ENCODE measurements at regions of chr7 and their contacts with region 1.

Region 1: GRCh38 chr7:148698397-148699023 is at the start of gene CUL1:
- DNase-seq: peak; percentile 83
- H3K4me3 Mint-ChIP-seq: peak within 1 kb of the TSS; percentile 91
- H3K27ac Mint-ChIP-seq: peak within 1 kb of the TSS; percentile 95
- H3K4me1 Mint-ChIP-seq: peaks cover 57% of the 10 kb centered on the region
- H3K27me3 Mint-ChIP-seq: no peaks in the 10 kb centered on the region
- total RNA-seq, gene CUL1: 69.4 and 74.5 TPM in 2 replicates

Region 2: GRCh38 chr7:148547951-148548350 is 150.6 kb before region 1 on chr7:
- intact Hi-C with region 1: no loop called
- DNase-seq: no peak
- H3K4me3 Mint-ChIP-seq: no peak overlapping the region
- H3K27ac Mint-ChIP-seq: no peak overlapping the region
- H3K4me1 Mint-ChIP-seq: peaks cover 10% of the 10 kb centered on the region
- H3K27me3 Mint-ChIP-seq: peaks cover 23% of the 10 kb centered on the region

Region 3: GRCh38 chr7:148563583-148564274 is 134.8 kb before region 1 on chr7:
- intact Hi-C with region 1: loop called (anchors 1 kb)
- DNase-seq: no peak
- H3K4me3 Mint-ChIP-seq: peak overlapping the region; percentile 44
- H3K27ac Mint-ChIP-seq: peak overlapping the region; percentile 75
- H3K4me1 Mint-ChIP-seq: peaks cover 16% of the 10 kb centered on the region
- H3K27me3 Mint-ChIP-seq: peaks cover 21% of the 10 kb centered on the region

Region 4: DNA sequence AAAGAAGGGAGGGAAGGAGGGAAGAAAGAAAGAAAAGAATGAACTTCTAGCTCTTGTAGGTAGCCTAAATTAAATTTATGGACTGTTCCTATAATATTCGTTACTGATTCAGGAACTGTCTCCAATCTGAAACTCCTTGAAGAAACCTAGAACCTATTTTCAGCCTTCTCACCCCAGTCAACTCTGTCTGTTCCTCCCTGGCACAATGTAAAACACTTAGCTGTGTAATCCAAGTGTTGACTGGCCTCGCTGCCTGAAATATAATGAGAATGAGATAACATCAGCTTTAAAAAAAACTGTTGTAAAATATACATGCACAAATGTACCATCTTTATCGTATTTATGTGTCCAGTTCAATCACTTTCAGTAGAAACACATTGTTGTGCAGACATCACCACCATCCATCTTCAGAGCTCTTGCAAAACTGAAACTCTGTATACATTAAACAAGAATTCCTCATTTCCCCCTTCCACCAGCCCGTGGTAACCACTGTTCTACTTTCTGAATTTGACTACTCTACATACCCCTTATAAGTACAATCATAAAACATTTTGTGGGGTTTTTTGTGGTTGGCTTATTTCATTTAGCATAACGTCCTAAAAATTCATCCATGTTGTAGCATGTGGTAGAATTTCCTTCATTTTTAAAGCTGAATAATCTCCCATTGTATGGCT is 114.2 kb before region 1 on chr7:
- intact Hi-C with region 1: loop called (anchors 1 kb)
- DNase-seq: no peak
- H3K4me3 Mint-ChIP-seq: peak overlapping the region; percentile 38
- H3K27ac Mint-ChIP-seq: no peak overlapping the region
- H3K4me1 Mint-ChIP-seq: peaks cover 33% of the 10 kb centered on the region
- H3K27me3 Mint-ChIP-seq: peaks cover 16% of the 10 kb centered on the region

Region 5: DNA sequence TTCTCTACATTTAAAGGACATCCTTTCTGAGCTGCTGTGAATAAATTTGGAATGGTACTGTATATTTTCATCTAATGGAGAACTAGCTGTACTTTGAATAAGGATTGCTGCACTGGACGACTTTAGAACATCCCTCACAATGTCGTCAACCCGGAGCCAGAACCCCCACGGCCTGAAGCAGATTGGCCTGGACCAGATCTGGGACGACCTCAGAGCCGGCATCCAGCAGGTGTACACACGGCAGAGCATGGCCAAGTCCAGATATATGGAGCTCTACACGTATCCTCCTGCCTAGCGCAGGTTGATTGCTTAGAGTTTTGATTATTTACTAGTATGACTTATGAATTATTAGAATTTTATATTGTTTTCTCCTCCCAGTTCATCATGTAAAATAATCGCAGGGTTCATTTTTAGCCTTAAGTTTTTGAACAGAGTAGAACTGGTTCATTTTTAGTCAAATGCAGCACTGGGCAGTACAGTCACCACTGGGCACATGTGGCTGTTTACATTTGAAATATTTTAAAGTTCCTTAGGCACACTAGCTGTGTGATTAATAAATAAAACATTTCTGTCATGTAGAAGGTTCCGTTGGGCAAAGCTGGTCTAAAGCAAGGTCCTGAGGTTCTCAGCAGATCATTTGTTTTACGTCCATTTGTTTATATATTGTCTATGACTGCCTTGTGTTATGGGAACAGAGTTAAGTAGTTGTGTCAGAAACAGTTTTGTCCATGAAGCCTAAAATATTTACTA is 31.6 kb after region 1 on chr7:
- intact Hi-C with region 1: loop called (anchors 2 kb)
- DNase-seq: no peak
- H3K4me3 Mint-ChIP-seq: no peak overlapping the region
- H3K27ac Mint-ChIP-seq: no peak overlapping the region
- H3K4me1 Mint-ChIP-seq: peaks cover 43% of the 10 kb centered on the region
- H3K27me3 Mint-ChIP-seq: no peaks in the 10 kb centered on the region

Region 6: DNA sequence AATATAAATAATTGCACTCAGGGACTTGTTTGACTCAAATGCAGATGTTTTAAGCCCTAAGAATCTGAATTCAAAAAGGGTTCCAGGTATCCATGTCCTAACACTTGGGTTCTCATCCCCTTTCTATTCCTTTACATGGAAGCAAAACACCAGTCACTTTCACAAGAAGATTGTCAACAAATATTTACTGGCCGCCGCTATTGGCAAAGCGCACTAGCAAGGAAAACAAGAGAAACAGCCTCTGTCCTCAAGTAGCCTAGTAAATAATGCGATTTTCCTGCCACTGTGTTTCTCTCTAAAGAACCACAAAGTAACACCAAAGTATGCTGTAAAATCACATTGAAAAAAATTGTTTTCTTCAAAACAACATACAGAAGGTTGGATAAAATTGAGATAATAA is 252.3 kb after region 1 on chr7:
- intact Hi-C with region 1: no loop called
- DNase-seq: no peak
- H3K4me3 Mint-ChIP-seq: no peak overlapping the region
- H3K27ac Mint-ChIP-seq: no peak overlapping the region
- H3K4me1 Mint-ChIP-seq: peaks cover 2% of the 10 kb centered on the region
- H3K27me3 Mint-ChIP-seq: no peaks in the 10 kb centered on the region

Region 7: DNA sequence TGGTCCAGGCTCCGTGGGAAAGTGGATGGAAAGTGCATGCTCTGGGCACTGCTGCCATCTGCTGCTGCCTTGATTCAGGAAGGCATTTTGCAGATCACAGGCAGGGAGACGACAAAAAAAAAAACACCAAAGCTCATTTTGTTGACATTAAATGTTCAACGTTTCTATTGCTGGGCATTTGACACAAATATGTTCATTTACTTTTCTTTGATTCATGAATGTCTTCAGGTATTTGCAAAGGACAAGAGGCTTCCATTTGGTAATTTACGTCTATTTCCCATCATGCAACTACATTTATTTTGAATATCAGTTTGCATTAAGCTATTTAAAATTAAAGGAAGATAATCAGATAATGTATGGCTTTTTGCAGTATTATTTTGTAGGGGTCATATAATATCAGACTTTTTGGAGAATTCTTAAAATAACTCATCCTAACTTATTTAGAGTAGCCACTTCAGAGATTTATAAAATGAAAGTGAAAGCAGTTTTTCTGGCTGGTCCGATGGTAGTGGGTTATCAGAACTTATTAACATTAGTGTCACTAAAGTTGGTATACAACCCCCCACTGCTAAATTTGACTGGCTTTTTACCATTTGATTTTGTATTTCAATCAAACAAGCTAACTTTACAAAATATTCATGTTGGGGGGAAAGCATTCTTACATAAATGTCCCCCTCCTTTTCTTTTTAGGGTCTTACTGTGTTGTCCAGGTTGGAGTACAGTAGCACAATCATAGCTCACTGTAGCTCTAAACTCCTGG is 264.5 kb after region 1 on chr7:
- intact Hi-C with region 1: loop called (anchors 2 kb)
- DNase-seq: peak; percentile 51
- H3K4me3 Mint-ChIP-seq: peak overlapping the region; percentile 86
- H3K27ac Mint-ChIP-seq: peak overlapping the region; percentile 77
- H3K4me1 Mint-ChIP-seq: peaks cover 25% of the 10 kb centered on the region
- H3K27me3 Mint-ChIP-seq: no peaks in the 10 kb centered on the region

Region 8: DNA sequence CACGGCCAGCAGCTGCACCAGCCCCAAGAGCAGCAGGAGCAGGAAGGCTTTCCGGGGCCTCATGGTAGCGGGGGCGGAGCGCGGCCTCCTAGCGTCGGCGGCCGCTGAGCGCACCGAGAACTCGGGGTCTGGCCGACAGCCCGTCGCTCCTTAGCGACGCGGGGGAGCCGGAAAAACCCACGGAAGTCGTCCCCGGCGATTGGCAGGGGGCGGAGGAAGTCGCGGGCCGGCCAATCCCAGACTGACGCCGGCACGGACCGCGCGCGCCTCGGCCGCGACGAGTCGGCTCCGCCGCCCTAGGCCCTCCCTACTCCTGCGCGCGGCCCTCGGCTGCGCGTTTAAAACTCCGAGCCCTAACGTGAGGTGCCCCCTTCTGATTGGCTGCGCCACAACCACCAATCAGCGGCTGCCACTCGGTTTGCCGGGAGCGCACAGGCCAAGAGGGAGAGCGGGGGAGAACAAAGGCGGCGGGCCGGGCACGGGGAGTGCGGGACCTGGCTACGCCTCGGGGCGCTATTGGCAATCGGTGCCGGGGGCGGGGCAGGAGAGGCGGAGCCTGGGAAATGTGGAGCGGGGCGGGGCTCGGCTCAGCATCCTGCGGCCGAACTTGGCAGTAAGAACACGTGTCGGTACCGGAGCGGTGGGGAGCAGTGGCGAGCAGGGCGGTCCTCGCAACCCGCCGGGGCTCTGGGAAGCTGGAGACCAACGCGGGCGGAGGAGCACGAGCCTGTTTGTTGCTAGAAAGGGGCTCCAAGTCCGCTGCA is 330.0 kb after region 1 on chr7 and contains the start of gene PDIA4:
- intact Hi-C with region 1: loop called (anchors 1 kb)
- DNase-seq: peak; percentile 100
- H3K4me3 Mint-ChIP-seq: peak within 1 kb of the TSS; percentile 98
- H3K27ac Mint-ChIP-seq: peak within 1 kb of the TSS; percentile 93
- H3K4me1 Mint-ChIP-seq: peaks cover 32% of the 10 kb centered on the region
- H3K27me3 Mint-ChIP-seq: peaks cover 2% of the 10 kb centered on the region
- total RNA-seq, gene PDIA4: 155 and 159 TPM in 2 replicates

Region 9: DNA sequence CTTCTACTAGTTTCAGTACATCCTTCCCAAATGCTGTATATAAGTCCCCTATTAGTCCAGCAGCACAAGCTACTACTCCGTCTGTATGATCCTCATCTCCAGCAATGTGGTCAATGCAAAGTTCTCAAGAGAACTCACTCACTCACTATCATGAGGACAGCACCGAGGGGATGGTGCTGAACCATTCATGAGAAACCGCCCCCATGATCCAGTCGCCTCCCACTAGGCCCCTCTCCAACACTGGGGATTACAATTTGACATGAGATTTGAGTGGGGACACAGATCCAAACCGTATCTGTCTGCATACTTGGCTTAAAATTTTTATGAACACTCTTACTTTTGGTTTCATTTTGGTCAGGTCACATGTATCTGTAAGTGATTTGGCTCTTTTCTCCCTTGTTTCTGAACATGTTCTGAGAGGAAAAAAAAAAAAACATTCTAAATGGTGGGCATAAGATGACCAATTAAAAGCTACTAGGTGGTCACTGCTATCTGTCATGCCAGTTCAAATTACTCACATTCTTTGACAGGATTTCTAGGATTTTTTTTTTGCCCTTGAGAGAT is 623.5 kb after region 1 on chr7:
- intact Hi-C with region 1: no loop called
- DNase-seq: no peak
- H3K4me3 Mint-ChIP-seq: peak overlapping the region; percentile 62
- H3K27ac Mint-ChIP-seq: peak overlapping the region; percentile 62
- H3K4me1 Mint-ChIP-seq: peaks cover 19% of the 10 kb centered on the region
- H3K27me3 Mint-ChIP-seq: peaks cover 7% of the 10 kb centered on the region